ENCODE measurements at regions of chr10 and their contacts with region 1.

Region 1: GRCh38 chr10:103493362-103493892 is at the start of gene NEURL1:
- DNase-seq: peak in 2 of 5 donors; percentile 10 to 60
- H3K4me3 ChIP-seq: peak within 1 kb of the TSS; percentile 37
- H3K4me3 Mint-ChIP-seq: peak within 1 kb of the TSS; percentile 79 to 92 (median 85)
- H3K27ac ChIP-seq: no peak within 1 kb of the TSS
- H3K27ac Mint-ChIP-seq: peak within 1 kb of the TSS in 3 of 8 donors; percentile 9 to 59 (median 27)
- H3K4me1 ChIP-seq: peaks cover 12% of the 10 kb centered on the region
- H3K4me1 Mint-ChIP-seq: peaks cover 11 to 37% (median 21%) of the 10 kb centered on the region in 3 donors
- H3K27me3 ChIP-seq: peaks cover 8% of the 10 kb centered on the region
- H3K27me3 Mint-ChIP-seq: peaks cover 25 to 29% of the 10 kb centered on the region in 2 donors
- total RNA-seq, gene NEURL1: 1.5 to 1.6 TPM

Region 2: DNA sequence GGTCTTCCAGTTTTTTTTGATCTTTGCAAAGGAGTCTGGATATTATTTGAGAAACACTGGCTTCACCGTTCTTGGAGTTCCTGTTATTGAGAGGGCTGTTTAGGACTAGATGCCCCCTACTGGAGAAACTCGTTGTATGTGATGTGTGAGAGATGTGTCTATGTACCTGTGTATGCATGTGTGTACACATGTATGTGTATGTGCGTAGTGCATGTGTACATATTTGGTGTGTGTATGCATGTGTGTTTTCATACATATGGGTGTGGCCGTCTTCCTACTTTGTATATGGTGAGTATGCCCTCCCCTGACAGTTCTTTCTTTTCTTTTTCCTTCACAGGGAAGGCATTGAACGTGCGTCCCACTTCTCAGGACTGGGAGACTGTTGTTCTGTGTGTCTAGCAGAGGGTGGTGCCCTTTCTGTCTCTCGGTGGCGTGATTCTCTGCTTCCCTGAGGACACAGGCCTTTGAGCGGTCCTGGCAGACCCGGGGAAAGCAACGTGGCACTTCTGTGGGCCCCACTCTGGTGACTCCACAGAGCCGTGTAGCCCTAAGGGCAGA is 11.4 kb before region 1 on chr10:
- CTCF ChIA-PET with region 1: interaction called, 10 read pairs
- POLR2A ChIA-PET with region 1: no interaction called
- DNase-seq: peak in 2 of 5 donors; percentile 58 to 59
- H3K4me3 ChIP-seq: no peak overlapping the region
- H3K4me3 Mint-ChIP-seq: no peak overlapping the region
- H3K27ac ChIP-seq: no peak overlapping the region
- H3K27ac Mint-ChIP-seq: peak overlapping the region in 1 of 8 donors; percentile 2
- H3K4me1 ChIP-seq: no peaks in the 10 kb centered on the region
- H3K4me1 Mint-ChIP-seq: peaks cover 8 to 11% (median 10%) of the 10 kb centered on the region in 3 donors
- H3K27me3 ChIP-seq: no peaks in the 10 kb centered on the region
- H3K27me3 Mint-ChIP-seq: no peaks in the 10 kb centered on the region

Region 3: GRCh38 chr10:103504181-103504783 is 10.9 kb after region 1 on chr10:
- CTCF ChIA-PET with region 1: no interaction called
- POLR2A ChIA-PET with region 1: no interaction called
- DNase-seq: peak in 2 of 5 donors; percentile 45 to 55
- H3K4me3 ChIP-seq: no peak overlapping the region
- H3K4me3 Mint-ChIP-seq: peak overlapping the region in 4 of 7 donors; percentile 0 to 6 (median 4)
- H3K27ac ChIP-seq: no peak overlapping the region
- H3K27ac Mint-ChIP-seq: peak overlapping the region in 5 of 8 donors; percentile 2 to 62 (median 4)
- H3K4me1 ChIP-seq: peaks cover 15% of the 10 kb centered on the region
- H3K4me1 Mint-ChIP-seq: peaks cover 9 to 14% (median 12%) of the 10 kb centered on the region in 3 donors
- H3K27me3 ChIP-seq: no peaks in the 10 kb centered on the region
- H3K27me3 Mint-ChIP-seq: peaks cover 17% of the 10 kb centered on the region in 2 donors

Region 4: DNA sequence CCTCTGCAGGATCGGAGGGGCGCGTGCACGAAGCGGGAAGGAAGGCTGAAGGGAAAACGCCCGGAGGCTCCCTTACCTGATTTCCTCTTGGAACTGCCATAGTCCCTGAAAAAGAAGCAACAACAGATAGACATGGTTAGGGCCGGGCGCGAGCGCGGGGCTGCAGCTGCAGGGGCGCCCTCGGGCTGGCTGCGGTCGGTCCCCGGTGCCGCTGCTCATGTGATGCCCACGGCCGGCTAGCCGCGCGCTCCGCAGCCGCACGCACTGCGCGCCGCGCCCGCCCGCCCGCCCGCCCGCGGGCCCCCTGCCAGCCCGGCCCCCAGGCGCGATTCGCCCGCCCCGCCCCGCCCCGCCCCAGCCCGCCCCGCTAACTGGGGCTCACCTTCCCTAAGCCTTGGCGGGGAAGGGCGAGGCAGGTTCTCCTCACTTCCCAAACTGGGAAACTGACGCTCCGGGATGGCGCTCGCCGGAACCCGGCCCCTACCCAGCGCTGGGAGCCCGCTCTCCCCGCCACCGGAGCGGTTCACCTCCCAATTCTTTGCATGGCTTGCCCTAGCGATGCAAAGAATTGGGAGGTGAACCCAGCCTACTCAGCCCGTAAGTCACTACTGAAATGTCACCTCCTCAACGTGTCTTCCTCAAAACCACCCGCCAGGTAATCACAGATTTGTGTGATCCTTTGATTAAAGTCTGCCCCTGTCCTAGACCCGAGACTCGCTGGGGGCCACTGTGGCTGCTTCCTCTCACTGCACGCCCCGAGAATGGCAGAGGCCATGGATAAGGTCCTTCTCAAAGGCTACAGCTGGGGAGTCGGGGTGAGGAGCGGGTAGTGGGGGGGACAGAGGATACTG is 199.8 kb after region 1 on chr10:
- CTCF ChIA-PET with region 1: no interaction called
- POLR2A ChIA-PET with region 1: no interaction called
- DNase-seq: peak; percentile 17 to 56 (median 32)
- H3K4me3 ChIP-seq: peak overlapping the region; percentile 61
- H3K4me3 Mint-ChIP-seq: peak overlapping the region; percentile 81 to 93 (median 88)
- H3K27ac ChIP-seq: no peak overlapping the region
- H3K27ac Mint-ChIP-seq: peak overlapping the region in 7 of 8 donors; percentile 35 to 93 (median 76)
- H3K4me1 ChIP-seq: peaks cover 39% of the 10 kb centered on the region
- H3K4me1 Mint-ChIP-seq: peaks cover 23 to 43% (median 28%) of the 10 kb centered on the region in 3 donors
- H3K27me3 ChIP-seq: no peaks in the 10 kb centered on the region
- H3K27me3 Mint-ChIP-seq: no peaks in the 10 kb centered on the region